ENCODE measurements at regions of chr9 and their contacts with region 1.

Region 1: DNA sequence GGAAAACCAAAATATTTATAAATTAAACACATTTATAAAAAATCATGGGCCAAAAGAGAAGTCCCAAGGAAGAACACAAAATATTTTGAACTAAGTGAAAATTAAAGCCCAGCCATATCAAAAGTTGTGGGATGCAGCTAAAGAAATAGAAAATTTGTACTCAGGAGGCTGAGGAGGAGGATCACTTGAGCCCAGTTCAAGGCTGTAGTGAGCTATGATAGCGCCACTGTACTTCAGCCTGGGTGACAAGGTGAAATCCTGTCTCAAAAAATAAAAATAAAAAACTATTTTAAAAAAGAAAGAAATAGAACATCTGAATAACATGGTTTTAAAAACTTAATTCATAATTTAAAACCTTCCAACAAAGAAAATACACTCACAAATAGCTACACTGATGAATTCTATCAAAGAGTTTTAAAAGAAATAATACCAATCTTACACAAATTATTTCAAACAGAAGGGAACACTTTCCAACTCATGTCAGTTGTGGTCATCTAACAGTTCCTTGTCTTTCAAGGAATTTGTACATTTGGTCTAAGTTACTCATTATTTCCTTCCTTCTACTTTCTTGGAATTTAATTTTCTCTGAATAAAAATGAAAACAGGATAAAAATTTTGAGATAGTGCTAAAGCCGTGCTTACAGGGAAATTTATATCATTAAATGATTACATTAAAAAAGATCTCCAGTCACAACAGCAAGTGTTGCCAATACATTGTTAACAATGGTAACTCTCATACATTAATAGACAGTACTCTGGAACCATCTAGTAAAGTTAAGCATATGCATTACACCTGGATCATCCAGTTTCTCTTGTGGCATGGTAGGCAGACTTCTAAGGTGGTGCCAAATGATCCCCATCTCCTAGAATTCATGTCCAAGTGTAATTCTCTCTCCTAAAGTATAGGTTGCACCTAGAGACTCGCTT is 17.8 kb downstream of the PTBP3 start:
- DNase-seq: no peak
- ATAC-seq: no peak
- H3K4me3 Mint-ChIP-seq: peak overlapping the region; percentile 21
- H3K27ac Mint-ChIP-seq: peak overlapping the region; percentile 86
- H3K4me1 Mint-ChIP-seq: peaks cover 61% of the 10 kb centered on the region
- H3K27me3 Mint-ChIP-seq: no peaks in the 10 kb centered on the region

Region 2: DNA sequence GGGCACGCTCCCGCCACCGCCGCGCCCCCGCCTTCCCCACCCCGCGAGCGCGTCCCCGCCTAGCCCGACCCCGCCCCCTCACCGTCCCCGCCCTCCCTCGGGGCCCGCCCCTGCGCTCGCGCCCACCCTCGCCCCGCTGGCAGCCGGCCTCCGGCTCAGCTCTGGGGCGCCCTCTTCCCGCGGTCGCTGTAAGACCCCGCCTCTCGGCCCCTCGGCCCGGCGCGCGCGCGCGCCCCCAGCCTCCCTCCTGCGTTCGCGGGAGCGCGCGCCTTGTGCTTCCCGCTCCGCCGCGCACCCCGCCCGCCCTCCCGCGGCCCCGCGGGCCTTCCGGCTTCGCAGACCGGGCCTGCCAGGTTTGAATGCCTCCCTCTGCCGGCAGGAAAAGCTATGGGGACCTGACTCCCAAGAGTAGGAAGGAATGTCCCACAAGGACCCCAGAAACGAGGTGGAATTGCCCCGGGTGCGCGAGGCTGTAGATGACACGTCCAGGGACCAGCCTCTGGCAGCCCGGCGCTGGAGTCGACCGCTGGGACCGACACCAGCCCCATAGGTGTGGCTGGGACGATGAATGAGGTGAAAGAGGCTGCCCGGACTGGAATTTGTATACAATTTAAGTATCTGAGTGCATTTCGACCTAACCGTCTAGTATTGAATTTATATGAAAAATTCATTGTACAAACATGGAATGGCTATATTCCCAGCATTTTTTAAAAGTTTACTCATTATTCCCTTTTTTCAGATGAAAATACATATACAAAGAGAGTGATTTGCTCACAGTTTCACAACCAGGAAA is 18.2 kb after region 1 on chr9:
- CTCF ChIA-PET with region 1: interaction called, 27 read pairs
- DNase-seq: peak; percentile 95
- ATAC-seq: peak; percentile 84
- H3K4me3 Mint-ChIP-seq: peak overlapping the region; percentile 94
- H3K27ac Mint-ChIP-seq: peak overlapping the region; percentile 98
- H3K4me1 Mint-ChIP-seq: peaks cover 27% of the 10 kb centered on the region
- H3K27me3 Mint-ChIP-seq: peaks cover 2% of the 10 kb centered on the region

Region 3: DNA sequence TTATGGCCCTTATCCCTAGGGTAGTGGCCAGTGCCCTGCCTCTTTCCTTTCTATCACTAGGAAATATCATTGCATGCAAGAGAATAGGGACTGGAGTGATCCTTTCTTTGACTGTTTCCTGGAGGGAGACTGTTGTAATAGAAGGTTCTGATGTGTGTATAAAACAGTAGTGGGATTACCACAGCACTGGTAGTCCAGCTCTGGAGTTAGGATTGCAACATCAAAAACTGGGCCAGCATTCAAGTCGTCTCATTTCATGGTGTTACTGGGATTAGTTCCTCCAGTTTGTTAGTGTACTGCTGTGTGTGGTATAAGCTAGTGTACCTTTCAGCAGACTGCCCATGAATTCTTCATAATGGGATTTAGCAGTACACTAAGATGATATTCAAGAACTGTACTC is 216.8 kb after region 1 on chr9:
- CTCF ChIA-PET with region 1: no interaction called
- DNase-seq: no peak
- ATAC-seq: no peak
- H3K4me3 Mint-ChIP-seq: no peak overlapping the region
- H3K27ac Mint-ChIP-seq: no peak overlapping the region
- H3K4me1 Mint-ChIP-seq: no peaks in the 10 kb centered on the region
- H3K27me3 Mint-ChIP-seq: no peaks in the 10 kb centered on the region